ENCODE measurements at regions of chr1 and their contacts with region 1.

Region 1: DNA sequence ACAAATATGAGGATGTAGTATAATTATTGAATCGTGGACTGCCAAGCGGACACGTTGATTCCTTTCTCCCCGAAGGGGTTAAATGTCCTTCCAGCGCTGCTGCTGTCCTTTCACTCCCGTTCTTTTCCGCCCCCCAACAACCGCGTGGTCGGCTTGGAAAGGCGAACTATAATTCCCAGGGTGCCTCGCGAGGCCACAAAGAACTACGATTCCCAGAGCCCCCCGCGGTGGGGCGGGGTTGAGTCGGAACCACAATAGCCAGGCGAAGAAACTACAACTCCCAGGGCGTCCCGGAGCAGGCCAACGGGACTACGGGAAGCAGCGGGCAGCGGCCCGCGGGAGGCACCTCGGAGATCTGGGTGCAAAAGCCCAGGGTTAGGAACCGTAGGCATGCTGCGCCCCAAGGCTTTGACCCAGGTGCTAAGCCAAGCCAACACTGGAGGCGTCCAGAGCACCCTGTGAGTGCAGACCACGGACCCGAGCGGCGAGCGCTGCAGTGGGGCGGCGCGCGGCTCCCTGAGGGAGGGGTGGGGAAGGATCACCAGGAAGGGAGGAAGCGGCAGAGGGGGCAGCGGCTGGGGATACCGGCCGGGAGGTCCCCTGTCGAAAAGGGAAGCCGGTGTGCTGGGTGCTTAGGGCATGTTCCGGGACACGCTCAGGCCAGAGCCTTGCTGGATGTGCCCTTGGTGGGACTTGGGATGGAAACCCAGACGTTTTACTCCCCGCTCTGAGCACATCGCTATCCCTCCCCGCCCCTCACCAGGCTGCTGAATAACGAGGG is at the start of gene LAMTOR2:
- DNase-seq: peak; percentile 83
- ATAC-seq: peak; percentile 84
- H3K4me3 ChIP-seq: peak within 1 kb of the TSS; percentile 93
- H3K27ac ChIP-seq: peak within 1 kb of the TSS; percentile 95
- H3K4me1 ChIP-seq: no peaks in the 10 kb centered on the region; the same call in 1 of the 2 replicates
- H3K27me3 ChIP-seq: no peaks in the 10 kb centered on the region
- CTCF ChIP-seq: no peak
- EP300 ChIP-seq: no peak
- POLR2A ChIP-seq: peak; percentile 73; the same call in 1 of the 2 replicates
- RAD21 ChIP-seq: no peak
- polyA plus RNA-seq, gene LAMTOR2: 225 to 264 TPM

Region 2: GRCh38 chr1:156012051-156012817 is 42.5 kb before region 1 on chr1:
- CTCF ChIA-PET with region 1: no interaction called
- POLR2A ChIA-PET with region 1: interaction called, 3 read pairs
- RAD21 ChIA-PET with region 1: no interaction called
- SMC1A ChIA-PET with region 1: no interaction called
- in situ Hi-C with region 1: no loop called
- intact Hi-C with region 1: loop called (anchors 2 kb)
- DNase-seq: peak; percentile 70
- ATAC-seq: peak; percentile 96
- H3K4me3 ChIP-seq: no peak overlapping the region
- H3K27ac ChIP-seq: peak overlapping the region; percentile 53; the same call in 1 of the 2 replicates
- H3K4me1 ChIP-seq: peaks cover 31% of the 10 kb centered on the region
- H3K27me3 ChIP-seq: no peaks in the 10 kb centered on the region
- CTCF ChIP-seq: no peak
- EP300 ChIP-seq: peak; percentile 47 to 63; a peak in 2 of 4 replicates
- POLR2A ChIP-seq: no peak
- RAD21 ChIP-seq: no peak

Region 3: GRCh38 chr1:156020292-156021089 is 34.2 kb before region 1 on chr1 and contains the start of gene SSR2:
- CTCF ChIA-PET with region 1: no interaction called
- POLR2A ChIA-PET with region 1: interaction called, 4 read pairs
- RAD21 ChIA-PET with region 1: no interaction called
- SMC1A ChIA-PET with region 1: interaction called, 3 read pairs
- in situ Hi-C with region 1: no loop called
- intact Hi-C with region 1: loop called (anchors 2 kb)
- DNase-seq: peak; percentile 76
- ATAC-seq: peak; percentile 100
- H3K4me3 ChIP-seq: peak within 1 kb of the TSS; percentile 92
- H3K27ac ChIP-seq: peak within 1 kb of the TSS; percentile 78
- H3K4me1 ChIP-seq: peaks cover 6% of the 10 kb centered on the region
- H3K27me3 ChIP-seq: no peaks in the 10 kb centered on the region; a peak in 1 of 4 replicates
- CTCF ChIP-seq: 0 out of 6 replicates have a peak, but pooled peaks of 1 of the 3 experiments have one; percentile 9
- EP300 ChIP-seq: no peak
- POLR2A ChIP-seq: peak; percentile 91
- RAD21 ChIP-seq: no peak
- polyA plus RNA-seq, gene SSR2: 395 to 407 TPM